CD14-positive monocyte (primary cell): ENCODE measurements at regions of chr9 and their contacts with region 1.

Region 1: DNA sequence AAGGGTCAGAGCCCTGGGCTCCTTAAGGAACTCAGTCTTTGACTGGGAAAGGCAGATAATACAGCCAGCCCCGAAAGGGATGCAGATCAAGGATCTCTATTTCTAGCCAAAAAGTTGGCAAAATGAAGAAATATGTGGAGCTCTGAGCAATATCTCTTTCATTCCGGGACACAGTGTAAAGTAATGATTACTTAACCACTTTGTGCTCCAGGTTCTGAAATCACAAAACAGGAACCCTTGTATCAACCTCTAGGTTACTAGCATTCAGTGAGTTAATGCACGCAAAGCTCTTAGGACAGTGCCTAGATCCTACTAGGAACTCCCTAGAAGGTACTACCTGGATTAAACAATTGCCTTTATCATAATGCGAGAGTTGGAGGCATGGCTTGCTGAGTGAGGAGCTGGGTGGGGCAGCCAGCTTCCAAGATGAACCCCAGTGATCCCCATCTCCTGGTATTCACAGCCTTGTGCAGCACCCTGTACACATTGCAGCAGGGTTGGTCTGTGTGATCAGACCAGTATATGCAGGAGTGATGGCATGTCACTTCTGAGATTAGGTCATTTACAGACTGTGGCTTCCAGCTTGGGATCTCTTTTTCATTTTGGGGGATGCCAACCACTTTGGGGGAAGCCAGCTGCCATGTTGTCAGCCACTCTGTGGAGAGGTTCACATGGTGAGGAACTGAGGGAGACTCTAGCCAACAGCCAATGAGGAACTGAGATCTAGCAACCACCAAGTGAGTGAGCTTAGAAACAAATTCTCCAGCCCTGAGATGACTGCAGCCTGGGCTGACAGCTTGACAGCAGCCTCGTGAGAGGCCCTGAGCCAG is 103.1 kb upstream of the SLC44A1 start:
- DNase-seq: peak; percentile 76 to 89 (median 81)
- H3K4me3 ChIP-seq: no peak overlapping the region
- H3K4me3 Mint-ChIP-seq: no peak overlapping the region
- H3K27ac ChIP-seq: peak overlapping the region; percentile 66 to 91
- H3K27ac Mint-ChIP-seq: peak overlapping the region; percentile 88 to 99 (median 92)
- H3K4me1 ChIP-seq: peaks cover 44 to 49% of the 10 kb centered on the region in 2 donors
- H3K4me1 Mint-ChIP-seq: peaks cover 47% of the 10 kb centered on the region
- H3K27me3 ChIP-seq: no peaks in the 10 kb centered on the region
- H3K27me3 Mint-ChIP-seq: peaks cover 0 to 3% (median 2%) of the 10 kb centered on the region in 3 donors
- CTCF ChIP-seq: no peak

Region 2: GRCh38 chr9:104863180-104863883 is 278.0 kb before region 1 on chr9:
- intact Hi-C with region 1: loop called (anchors 5 to 10 kb)
- DNase-seq: peak; percentile 61 to 71 (median 69)
- H3K4me3 ChIP-seq: no peak overlapping the region
- H3K4me3 Mint-ChIP-seq: no peak overlapping the region
- H3K27ac ChIP-seq: peak overlapping the region in 1 of 2 donors; percentile 24
- H3K27ac Mint-ChIP-seq: peak overlapping the region in 6 of 7 donors; percentile 38 to 76 (median 56)
- H3K4me1 ChIP-seq: peaks cover 51 to 74% of the 10 kb centered on the region in 2 donors
- H3K4me1 Mint-ChIP-seq: peaks cover 69% of the 10 kb centered on the region
- H3K27me3 ChIP-seq: no peaks in the 10 kb centered on the region
- H3K27me3 Mint-ChIP-seq: no peaks in the 10 kb centered on the region
- CTCF ChIP-seq: peak; percentile 81

Region 3: GRCh38 chr9:104944356-104944755 is 197.0 kb before region 1 on chr9:
- intact Hi-C with region 1: no loop called
- DNase-seq: no peak
- H3K4me3 ChIP-seq: no peak overlapping the region
- H3K4me3 Mint-ChIP-seq: no peak overlapping the region
- H3K27ac ChIP-seq: no peak overlapping the region
- H3K27ac Mint-ChIP-seq: no peak overlapping the region
- H3K4me1 ChIP-seq: no peaks in the 10 kb centered on the region
- H3K4me1 Mint-ChIP-seq: no peaks in the 10 kb centered on the region
- H3K27me3 ChIP-seq: no peaks in the 10 kb centered on the region
- H3K27me3 Mint-ChIP-seq: peaks cover 0 to 4% (median 3%) of the 10 kb centered on the region in 3 donors
- CTCF ChIP-seq: no peak

Region 4: DNA sequence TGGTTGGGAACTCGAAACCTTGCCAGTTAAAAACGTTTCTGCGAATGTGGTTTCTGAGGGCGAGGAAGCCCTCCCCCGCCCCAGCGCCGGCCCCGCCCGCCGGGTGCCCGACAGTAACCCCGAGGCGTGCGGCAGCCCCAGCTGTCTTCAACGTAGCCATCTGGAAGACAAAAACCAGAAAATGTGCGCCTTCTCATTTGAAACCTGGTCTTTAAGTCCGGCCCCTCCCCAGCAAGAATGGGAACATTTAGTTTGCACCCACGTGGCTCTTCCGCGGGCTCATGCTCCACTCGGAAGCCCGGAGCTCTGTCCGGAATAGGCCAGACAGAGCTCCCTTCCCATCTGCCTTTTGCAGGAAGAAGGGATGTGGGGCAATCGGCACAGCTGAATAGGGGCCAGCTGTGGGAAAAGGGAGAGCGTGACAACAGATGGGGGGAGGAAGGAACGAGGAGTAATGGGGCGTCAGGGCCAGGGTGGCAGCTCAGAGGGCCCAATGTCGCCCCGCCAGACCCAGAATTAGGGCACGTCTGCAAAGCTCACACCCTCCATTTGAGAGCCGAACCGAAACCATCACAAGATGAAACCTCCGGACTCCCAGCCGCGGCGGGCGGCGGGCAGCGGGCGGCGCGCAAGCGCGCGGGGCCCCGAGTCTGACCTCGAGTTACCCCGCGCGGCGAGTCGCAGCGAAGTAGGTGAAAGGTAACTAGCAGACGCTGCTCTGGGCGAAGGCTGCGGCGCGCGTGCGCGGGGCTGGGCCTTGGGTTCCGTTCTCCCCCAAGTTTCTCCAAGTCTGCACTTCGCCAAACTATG is 150.0 kb before region 1 on chr9:
- intact Hi-C with region 1: loop called in 1 of 2 experiments (anchors 1 kb)
- DNase-seq: peak; percentile 86 to 91 (median 89)
- H3K4me3 ChIP-seq: peak overlapping the region; percentile 46 to 81 (median 57)
- H3K4me3 Mint-ChIP-seq: peak overlapping the region; percentile 93 to 96
- H3K27ac ChIP-seq: peak overlapping the region; percentile 97
- H3K27ac Mint-ChIP-seq: peak overlapping the region; percentile 97 to 99 (median 98)
- H3K4me1 ChIP-seq: peaks cover 43 to 51% of the 10 kb centered on the region in 2 donors
- H3K4me1 Mint-ChIP-seq: peaks cover 46% of the 10 kb centered on the region
- H3K27me3 ChIP-seq: no peaks in the 10 kb centered on the region
- H3K27me3 Mint-ChIP-seq: peaks cover 0 to 9% (median 3%) of the 10 kb centered on the region in 3 donors
- CTCF ChIP-seq: no peak

Region 5: GRCh38 chr9:105007143-105007542 is 134.2 kb before region 1 on chr9:
- intact Hi-C with region 1: loop called in 1 of 2 experiments (anchors 5 kb)
- DNase-seq: peak; percentile 92 to 97 (median 97)
- H3K4me3 ChIP-seq: peak overlapping the region in 1 of 3 experiments; percentile 43
- H3K4me3 Mint-ChIP-seq: peak overlapping the region; percentile 54 to 79
- H3K27ac ChIP-seq: peak overlapping the region; percentile 70 to 75
- H3K27ac Mint-ChIP-seq: peak overlapping the region; percentile 92 to 97 (median 95)
- H3K4me1 ChIP-seq: peaks cover 49 to 58% of the 10 kb centered on the region in 2 donors
- H3K4me1 Mint-ChIP-seq: peaks cover 47% of the 10 kb centered on the region
- H3K27me3 ChIP-seq: no peaks in the 10 kb centered on the region
- H3K27me3 Mint-ChIP-seq: peaks cover 0 to 6% (median 3%) of the 10 kb centered on the region in 3 donors
- CTCF ChIP-seq: no peak

Region 6: DNA sequence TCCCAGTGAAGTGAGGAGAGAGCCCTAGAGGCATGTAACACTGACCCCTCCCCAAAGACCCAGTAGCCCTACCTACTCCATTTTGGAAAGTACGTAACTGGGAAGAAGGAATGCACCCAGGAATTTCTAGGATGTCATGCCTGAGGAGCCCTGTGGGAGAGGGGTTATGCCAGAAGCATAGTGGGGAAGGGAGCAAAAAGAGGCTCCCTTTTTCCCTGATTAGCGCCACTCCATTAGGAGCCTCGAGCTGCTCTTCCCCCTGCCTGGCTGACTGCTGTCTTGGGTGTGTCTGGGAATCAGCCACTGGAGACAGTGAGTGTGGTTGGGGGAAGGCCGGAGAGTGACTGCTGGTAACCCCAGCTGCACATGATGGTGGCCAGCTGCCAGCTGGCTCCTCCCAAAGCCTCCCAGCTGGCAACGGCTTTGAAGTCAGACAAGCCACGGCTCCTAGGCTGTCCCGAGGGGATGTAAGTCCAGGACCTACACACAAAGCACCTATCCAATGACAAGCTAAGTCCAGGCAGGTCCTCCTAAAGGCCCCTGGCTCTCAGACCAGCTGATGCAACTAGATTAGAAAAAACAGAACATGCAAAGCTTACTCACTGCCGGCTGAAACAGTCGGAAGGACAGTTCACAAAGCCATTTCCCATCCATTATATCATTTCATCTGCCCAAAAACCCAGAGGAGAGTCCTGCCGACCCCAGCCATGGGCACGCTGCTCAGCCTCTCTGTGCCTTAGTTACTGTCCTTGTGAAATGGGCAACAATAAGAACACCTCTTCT is 76.9 kb before region 1 on chr9:
- intact Hi-C with region 1: loop called (anchors 5 kb)
- DNase-seq: peak; percentile 90 to 93 (median 91)
- H3K4me3 ChIP-seq: peak overlapping the region in 1 of 3 experiments; percentile 44
- H3K4me3 Mint-ChIP-seq: peak overlapping the region; percentile 64 to 85
- H3K27ac ChIP-seq: peak overlapping the region; percentile 97 to 99
- H3K27ac Mint-ChIP-seq: peak overlapping the region; percentile 96 to 99 (median 98)
- H3K4me1 ChIP-seq: peaks cover 56 to 57% of the 10 kb centered on the region in 2 donors
- H3K4me1 Mint-ChIP-seq: peaks cover 61% of the 10 kb centered on the region
- H3K27me3 ChIP-seq: no peaks in the 10 kb centered on the region
- H3K27me3 Mint-ChIP-seq: peaks cover 0 to 9% (median 1%) of the 10 kb centered on the region in 3 donors
- CTCF ChIP-seq: no peak

Region 7: GRCh38 chr9:105232207-105232606 is 90.8 kb after region 1 on chr9:
- intact Hi-C with region 1: no loop called
- DNase-seq: no peak
- H3K4me3 ChIP-seq: no peak overlapping the region
- H3K4me3 Mint-ChIP-seq: no peak overlapping the region
- H3K27ac ChIP-seq: no peak overlapping the region
- H3K27ac Mint-ChIP-seq: no peak overlapping the region
- H3K4me1 ChIP-seq: peaks cover 0 to 10% of the 10 kb centered on the region in 2 donors
- H3K4me1 Mint-ChIP-seq: peaks cover 9% of the 10 kb centered on the region
- H3K27me3 ChIP-seq: no peaks in the 10 kb centered on the region
- H3K27me3 Mint-ChIP-seq: peaks cover 0 to 2% (median 2%) of the 10 kb centered on the region in 3 donors
- CTCF ChIP-seq: no peak